Endothelial cell of umbilical vein (primary cell): ENCODE measurements at regions of chr9 and their contacts with region 1.

Region 1: DNA sequence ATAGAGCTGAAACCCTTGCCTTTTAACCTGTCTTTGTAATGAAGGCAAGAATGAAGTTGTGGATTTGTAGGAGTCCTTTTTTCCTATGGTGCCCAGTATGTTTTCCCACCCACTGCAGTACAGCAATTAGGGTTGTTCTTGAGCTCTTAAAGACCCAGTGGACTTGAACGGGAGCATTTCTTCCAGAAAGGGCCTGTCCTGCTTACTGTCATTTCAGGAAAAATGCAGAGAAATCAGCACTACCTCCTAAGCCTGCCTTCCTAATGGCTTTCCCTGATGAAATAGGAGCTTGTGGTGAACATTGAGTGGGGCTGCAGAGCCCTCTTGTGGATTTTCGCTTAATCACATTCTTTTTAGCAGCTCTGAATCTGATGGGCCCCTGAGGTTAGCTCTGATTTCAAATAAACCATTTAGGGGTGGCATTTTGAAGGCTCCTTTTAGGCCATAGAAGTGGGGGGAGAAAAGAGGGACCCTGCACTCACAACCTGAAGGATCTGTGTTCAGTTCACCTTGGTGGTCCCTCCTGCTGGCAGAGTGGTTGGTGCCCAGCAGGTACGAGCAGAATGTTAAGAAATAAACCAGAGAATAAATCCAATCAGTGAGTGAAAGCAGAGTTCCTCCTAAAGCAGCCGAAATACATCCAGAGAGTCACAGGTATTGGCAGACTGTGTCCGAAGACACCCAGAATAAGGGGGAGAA is 188.0 kb upstream of the KLF9 start:
- DNase-seq: peak; percentile 87
- H3K4me3 ChIP-seq: no peak overlapping the region
- H3K27ac ChIP-seq: peak overlapping the region; percentile 73
- H3K4me1 ChIP-seq: peaks cover 17% of the 10 kb centered on the region
- H3K27me3 ChIP-seq: no peaks in the 10 kb centered on the region
- CTCF ChIP-seq: peak; percentile 66 to 77
- POLR2A ChIP-seq: no peak

Region 2: GRCh38 chr9:70111042-70111602 is 491.3 kb before region 1 on chr9:
- CTCF ChIA-PET with region 1: interaction called, 72 read pairs
- POLR2A ChIA-PET with region 1: no interaction called
- dilution Hi-C with region 1: no loop called
- intact Hi-C with region 1: loop called (anchors 1 kb)
- DNase-seq: peak; percentile 73
- H3K4me3 ChIP-seq: no peak overlapping the region
- H3K27ac ChIP-seq: no peak overlapping the region
- H3K4me1 ChIP-seq: peaks cover 19% of the 10 kb centered on the region
- H3K27me3 ChIP-seq: peaks cover 3 to 4% of the 10 kb centered on the region in 2 experiments
- CTCF ChIP-seq: peak; percentile 88 to 94
- POLR2A ChIP-seq: no peak

Region 3: GRCh38 chr9:70352802-70353201 is 249.7 kb before region 1 on chr9:
- CTCF ChIA-PET with region 1: interaction called, 255 read pairs
- POLR2A ChIA-PET with region 1: no interaction called
- dilution Hi-C with region 1: no loop called
- intact Hi-C with region 1: loop called (anchors 1 kb)
- DNase-seq: peak; percentile 6
- H3K4me3 ChIP-seq: no peak overlapping the region
- H3K27ac ChIP-seq: no peak overlapping the region
- H3K4me1 ChIP-seq: no peaks in the 10 kb centered on the region
- H3K27me3 ChIP-seq: no peaks in the 10 kb centered on the region
- CTCF ChIP-seq: peak; percentile 8 to 42
- POLR2A ChIP-seq: no peak

Region 4: GRCh38 chr9:70419546-70420266 is 182.8 kb before region 1 on chr9:
- CTCF ChIA-PET with region 1: interaction called, 46 read pairs
- POLR2A ChIA-PET with region 1: interaction called, 11 read pairs
- dilution Hi-C with region 1: no loop called
- intact Hi-C with region 1: loop called (anchors 1 kb)
- DNase-seq: peak; percentile 98
- H3K4me3 ChIP-seq: peak overlapping the region in 2 of 3 experiments; percentile 43 to 50
- H3K27ac ChIP-seq: peak overlapping the region; percentile 96
- H3K4me1 ChIP-seq: peaks cover 29% of the 10 kb centered on the region
- H3K27me3 ChIP-seq: no peaks in the 10 kb centered on the region
- CTCF ChIP-seq: peak in 1 of 2 donors; percentile 9
- POLR2A ChIP-seq: peak; percentile 92

Region 5: GRCh38 chr9:70510157-70510770 is 92.2 kb before region 1 on chr9:
- CTCF ChIA-PET with region 1: interaction called, 12 read pairs
- POLR2A ChIA-PET with region 1: no interaction called
- dilution Hi-C with region 1: no loop called
- intact Hi-C with region 1: loop called (anchors 1 kb)
- DNase-seq: peak; percentile 46
- H3K4me3 ChIP-seq: no peak overlapping the region
- H3K27ac ChIP-seq: no peak overlapping the region
- H3K4me1 ChIP-seq: no peaks in the 10 kb centered on the region
- H3K27me3 ChIP-seq: no peaks in the 10 kb centered on the region
- CTCF ChIP-seq: peak; percentile 64 to 68
- POLR2A ChIP-seq: no peak

Region 6: GRCh38 chr9:70587201-70587600 is 15.3 kb before region 1 on chr9:
- CTCF ChIA-PET with region 1: interaction called, 19 read pairs
- POLR2A ChIA-PET with region 1: no interaction called
- dilution Hi-C with region 1: no loop called
- intact Hi-C with region 1: loop called (anchors 1 kb)
- DNase-seq: peak; percentile 83
- H3K4me3 ChIP-seq: no peak overlapping the region
- H3K27ac ChIP-seq: peak overlapping the region; percentile 68
- H3K4me1 ChIP-seq: peaks cover 34% of the 10 kb centered on the region
- H3K27me3 ChIP-seq: no peaks in the 10 kb centered on the region
- CTCF ChIP-seq: no peak
- POLR2A ChIP-seq: no peak